Colonic mucosa (tissue), 4 donors: ENCODE measurements at regions of chr12 and their contacts with region 1.

Region 1: DNA sequence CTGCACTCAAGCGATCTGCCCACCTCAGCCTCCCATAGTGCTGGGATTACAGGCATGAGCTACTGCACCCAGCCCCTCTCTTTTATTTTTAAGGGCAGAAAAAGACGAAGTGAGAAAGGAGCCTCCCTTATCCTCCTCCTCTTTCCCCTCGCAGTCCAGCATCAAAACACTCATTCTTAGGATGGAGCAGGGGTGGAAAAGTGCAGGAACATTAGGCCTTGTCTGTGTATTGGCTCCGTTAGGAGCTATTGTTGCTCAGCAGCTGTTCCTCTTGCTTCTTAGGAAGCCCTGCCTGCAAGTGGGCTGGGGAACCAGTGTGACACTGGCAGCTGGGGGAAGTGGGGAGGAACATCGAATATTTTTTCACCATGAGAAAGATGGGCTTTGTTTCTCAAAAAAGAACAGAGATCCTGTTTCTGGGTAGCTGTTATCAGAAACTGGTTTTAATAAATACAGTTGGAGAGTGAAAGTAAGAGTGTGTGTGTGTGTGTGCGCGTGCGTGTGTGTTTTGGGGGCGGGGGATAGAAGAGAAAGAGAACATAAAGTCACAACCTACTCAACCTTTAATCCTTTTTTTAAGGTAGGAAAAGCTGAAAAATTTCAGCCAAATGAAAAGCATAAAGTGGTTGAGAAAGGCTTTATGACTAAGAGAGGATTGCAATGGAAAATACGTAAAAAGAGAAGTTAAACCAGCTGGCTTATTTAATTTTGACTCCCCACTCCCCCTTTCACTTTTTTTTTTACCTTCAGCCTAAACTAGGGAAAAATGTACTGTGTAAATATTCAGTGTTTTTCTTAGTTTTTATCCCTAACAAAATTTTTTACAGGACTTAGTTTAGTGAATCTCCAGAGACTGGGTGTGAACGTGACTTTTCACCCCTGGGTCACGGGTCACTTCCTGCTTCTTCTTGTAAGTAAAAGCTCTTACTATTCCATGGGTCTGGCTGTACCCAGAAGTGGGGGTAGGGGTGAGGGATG is 197.2 kb upstream of the PLEKHG7 start:
- DNase-seq: peak; percentile 72
- H3K4me3 ChIP-seq: no peak overlapping the region
- H3K27ac ChIP-seq: peak overlapping the region; percentile 65
- H3K4me1 ChIP-seq: peaks cover 8% of the 10 kb centered on the region
- H3K27me3 ChIP-seq: no peaks in the 10 kb centered on the region
- CTCF ChIP-seq: no peak

Region 2: DNA sequence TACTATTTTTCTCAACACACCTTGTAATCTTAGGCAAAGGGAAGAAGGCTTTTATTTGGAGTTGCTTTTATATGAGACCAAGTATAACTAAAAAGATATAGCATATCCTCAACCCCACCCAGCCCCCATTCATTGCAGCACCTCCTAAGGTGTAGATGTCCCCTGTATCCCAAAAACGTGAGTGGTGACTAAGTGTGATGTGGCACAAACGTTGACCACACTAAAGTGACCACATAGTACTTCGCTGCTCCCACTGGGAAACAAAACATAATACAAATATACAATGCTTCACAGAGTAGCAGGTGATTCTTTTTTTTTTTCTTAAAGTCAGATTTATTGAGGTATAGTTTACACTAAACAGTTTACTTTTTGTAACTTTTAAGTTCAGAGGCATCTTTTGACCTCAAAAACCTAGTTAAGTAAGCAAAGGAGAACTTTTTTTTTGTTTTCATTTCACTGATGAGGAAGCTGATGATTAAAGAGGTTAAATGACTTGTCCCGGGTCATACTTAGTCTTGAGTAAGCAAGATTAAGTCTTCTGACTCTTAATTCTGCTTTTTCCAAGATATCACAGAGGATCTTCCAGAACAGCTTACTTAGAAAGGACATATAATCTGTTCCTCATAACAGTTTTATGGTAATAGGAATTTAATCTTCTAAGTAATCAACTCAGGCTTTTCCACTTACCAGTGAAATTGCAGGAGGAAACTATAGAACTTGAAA is 47.9 kb before region 1 on chr12:
- intact Hi-C with region 1: no loop called
- DNase-seq: no peak
- H3K4me3 ChIP-seq: no peak overlapping the region
- H3K27ac ChIP-seq: no peak overlapping the region
- H3K4me1 ChIP-seq: no peaks in the 10 kb centered on the region
- H3K27me3 ChIP-seq: no peaks in the 10 kb centered on the region
- CTCF ChIP-seq: no peak

Region 3: GRCh38 chr12:92561543-92561899 is 56.0 kb after region 1 on chr12:
- intact Hi-C with region 1: loop called (anchors 10 kb)
- DNase-seq: peak; percentile 40
- H3K4me3 ChIP-seq: no peak overlapping the region
- H3K27ac ChIP-seq: no peak overlapping the region
- H3K4me1 ChIP-seq: no peaks in the 10 kb centered on the region
- H3K27me3 ChIP-seq: no peaks in the 10 kb centered on the region
- CTCF ChIP-seq: no peak

Region 4: DNA sequence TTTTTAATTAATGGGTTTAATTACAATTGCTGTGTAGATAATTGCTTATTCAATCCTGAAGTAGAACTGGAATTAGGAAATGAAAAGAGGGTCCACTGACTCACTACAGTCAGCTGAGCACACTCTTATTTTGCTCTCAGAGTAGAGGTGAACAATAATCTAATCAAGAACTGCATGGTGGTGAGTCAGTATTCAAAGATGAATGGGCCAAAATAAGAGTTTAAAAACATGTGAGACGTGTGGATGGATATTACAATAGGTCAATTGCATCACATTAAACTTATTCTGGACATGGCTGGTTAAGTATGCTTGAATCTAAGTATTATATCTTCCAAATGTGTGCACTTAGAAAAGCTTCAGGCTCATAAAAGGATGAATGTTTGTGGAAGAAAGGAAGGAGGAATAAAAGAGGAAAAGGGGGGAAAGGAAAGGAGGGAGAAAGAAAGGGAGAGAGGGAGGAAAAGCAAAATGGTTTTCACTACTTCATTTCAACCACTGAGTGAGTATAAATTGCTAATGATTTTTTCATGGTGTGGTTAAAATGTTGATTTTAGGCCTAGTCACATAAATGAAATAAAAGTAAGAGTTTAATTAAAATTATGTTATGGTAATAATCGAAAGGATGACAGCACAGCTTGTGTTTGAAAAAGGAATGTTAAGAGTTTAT is 450.6 kb after region 1 on chr12:
- intact Hi-C with region 1: no loop called
- DNase-seq: no peak
- H3K4me3 ChIP-seq: no peak overlapping the region
- H3K27ac ChIP-seq: no peak overlapping the region
- H3K4me1 ChIP-seq: no peaks in the 10 kb centered on the region
- H3K27me3 ChIP-seq: no peaks in the 10 kb centered on the region
- CTCF ChIP-seq: no peak